A673 (cell line): ENCODE measurements at regions of chr6 and their contacts with region 1.

Region 1: DNA sequence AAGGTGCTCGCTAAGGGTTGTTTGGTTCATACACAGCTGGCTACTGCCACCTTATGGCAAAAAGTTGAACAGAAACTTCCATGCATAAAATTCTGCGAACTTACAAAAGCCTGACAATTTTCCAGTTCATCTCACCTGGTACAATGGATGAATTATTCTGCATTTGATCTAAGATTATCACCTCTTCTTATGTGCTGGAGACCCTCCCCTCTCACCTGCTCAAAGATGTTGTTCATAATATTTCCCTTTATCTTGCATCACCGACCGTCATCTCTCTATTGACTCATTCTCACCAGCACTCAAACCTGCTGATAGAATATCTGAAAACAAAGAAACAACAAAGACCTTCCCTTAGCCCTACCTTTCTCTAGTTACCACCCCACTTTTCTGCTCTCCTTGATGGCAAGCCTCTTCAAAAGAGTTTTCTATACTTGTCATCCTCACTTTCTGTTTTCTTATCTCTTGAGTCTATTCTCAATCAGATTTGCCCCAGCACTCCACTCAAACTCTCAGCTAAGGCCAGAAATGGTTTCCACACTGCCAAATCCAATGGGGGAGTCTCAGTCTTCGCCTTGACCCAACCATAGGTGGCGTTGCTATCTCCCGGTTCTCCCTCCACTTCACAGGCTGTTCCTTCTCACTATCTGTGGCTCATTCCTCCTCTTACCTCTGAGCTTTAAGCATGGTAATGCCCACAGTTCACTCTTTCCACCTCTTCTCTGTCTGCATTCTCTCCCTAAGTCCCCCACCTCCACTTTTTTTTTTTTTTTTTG is 25.8 kb downstream of the SNRNP48 start:
- DNase-seq: peak; percentile 72
- H3K4me3 ChIP-seq: no peak overlapping the region
- H3K27ac ChIP-seq: no peak overlapping the region
- H3K4me1 ChIP-seq: no peaks in the 10 kb centered on the region
- H3K27me3 ChIP-seq: no peaks in the 10 kb centered on the region
- CTCF ChIP-seq: peak; percentile 79

Region 2: DNA sequence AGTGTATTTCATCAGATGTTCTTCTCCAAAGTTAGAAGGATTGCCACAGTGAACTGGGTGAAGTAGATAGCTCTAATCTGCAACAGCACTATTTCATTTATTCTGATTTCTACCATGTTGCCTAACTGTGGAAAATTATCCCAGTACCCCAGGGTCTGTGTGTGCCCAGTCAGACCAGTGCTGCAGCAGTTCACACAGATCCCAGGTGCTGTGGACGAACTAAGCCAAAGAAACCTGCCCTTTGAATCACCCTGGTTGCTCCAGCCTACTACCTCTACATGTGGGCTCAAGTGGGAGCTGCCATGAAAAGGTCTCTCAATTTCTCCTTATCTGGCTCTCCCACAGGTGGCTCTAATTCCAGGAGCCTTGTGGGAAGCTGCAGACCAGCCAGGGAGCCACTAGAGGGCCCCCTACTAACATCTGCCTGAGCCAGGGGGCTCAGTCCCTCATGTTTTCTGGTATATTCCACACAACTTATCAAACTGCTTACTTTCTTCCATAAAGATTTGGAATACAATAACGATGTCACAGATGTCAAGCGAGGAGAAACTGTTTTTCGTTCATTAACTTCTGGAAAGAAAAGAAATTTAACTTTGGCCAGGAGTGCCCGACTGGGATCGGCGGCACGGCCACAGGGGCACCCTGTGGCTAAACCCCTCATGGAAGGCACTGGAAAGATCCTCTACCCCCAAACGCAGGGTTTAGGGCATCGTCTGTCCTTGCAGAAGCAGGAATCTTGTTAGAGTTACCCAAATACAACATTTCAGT is 1058.9 kb before region 1 on chr6:
- CTCF ChIA-PET with region 1: no interaction called
- POLR2A ChIA-PET with region 1: no interaction called
- intact Hi-C with region 1: loop called (anchors 10 kb)
- DNase-seq: peak; percentile 74
- H3K4me3 ChIP-seq: no peak overlapping the region
- H3K27ac ChIP-seq: peak overlapping the region; percentile 48
- H3K4me1 ChIP-seq: peaks cover 8% of the 10 kb centered on the region
- H3K27me3 ChIP-seq: no peaks in the 10 kb centered on the region
- CTCF ChIP-seq: peak; percentile 97

Region 3: DNA sequence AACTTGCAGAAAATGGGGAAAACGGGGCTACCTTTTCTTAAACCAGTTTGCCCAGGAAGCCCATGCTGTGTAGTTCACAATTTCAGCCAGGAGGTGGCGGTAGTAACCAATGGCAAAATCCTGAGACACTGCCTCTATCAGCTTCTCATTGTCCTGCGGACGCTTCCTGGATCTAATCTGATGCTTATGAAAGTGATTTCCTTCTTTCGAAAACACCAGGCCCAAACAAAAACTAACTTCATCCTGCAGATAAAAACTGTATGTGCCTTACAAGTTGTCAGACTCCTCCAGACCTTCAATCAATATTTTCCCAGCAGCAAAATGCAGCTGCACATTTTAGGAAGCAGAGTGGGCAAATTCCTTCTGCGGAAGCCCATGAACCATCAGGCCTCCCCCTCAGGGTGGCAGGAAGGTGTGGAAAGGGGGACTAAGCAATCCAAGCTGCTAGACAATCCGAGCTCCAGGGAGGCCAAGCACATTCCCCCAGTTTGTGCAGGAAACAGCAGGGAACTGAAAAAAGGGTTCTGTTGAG is 938.8 kb before region 1 on chr6:
- CTCF ChIA-PET with region 1: interaction called, 5 read pairs
- POLR2A ChIA-PET with region 1: no interaction called
- intact Hi-C with region 1: loop called (anchors 2 kb)
- DNase-seq: peak; percentile 91
- H3K4me3 ChIP-seq: no peak overlapping the region
- H3K27ac ChIP-seq: peak overlapping the region; percentile 55
- H3K4me1 ChIP-seq: peaks cover 30% of the 10 kb centered on the region
- H3K27me3 ChIP-seq: no peaks in the 10 kb centered on the region
- CTCF ChIP-seq: peak; percentile 99

Region 4: DNA sequence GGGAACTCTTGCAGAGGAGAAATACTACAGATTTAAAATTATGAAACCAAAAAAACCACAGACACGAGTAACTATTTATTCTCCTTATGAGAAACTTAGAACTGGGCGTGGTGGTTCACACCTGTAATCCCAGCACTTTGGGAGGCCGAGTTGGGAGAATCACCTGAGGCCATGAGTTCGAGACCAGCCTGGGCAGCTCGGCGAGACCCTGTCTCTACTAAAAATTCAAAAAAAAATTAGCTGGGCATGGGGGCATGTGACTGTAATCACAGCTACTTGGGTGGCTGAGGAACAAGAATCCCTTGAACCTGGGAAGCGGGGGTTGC is 339.6 kb before region 1 on chr6:
- CTCF ChIA-PET with region 1: interaction called, 7 read pairs
- POLR2A ChIA-PET with region 1: no interaction called
- intact Hi-C with region 1: loop called (anchors 1 kb)
- DNase-seq: no peak
- H3K4me3 ChIP-seq: no peak overlapping the region
- H3K27ac ChIP-seq: no peak overlapping the region
- H3K4me1 ChIP-seq: no peaks in the 10 kb centered on the region
- H3K27me3 ChIP-seq: no peaks in the 10 kb centered on the region
- CTCF ChIP-seq: no peak

Region 5: GRCh38 chr6:7414811-7415210 is 201.0 kb before region 1 on chr6:
- CTCF ChIA-PET with region 1: no interaction called
- POLR2A ChIA-PET with region 1: no interaction called
- intact Hi-C with region 1: loop called (anchors 5 kb)
- DNase-seq: no peak
- H3K4me3 ChIP-seq: no peak overlapping the region
- H3K27ac ChIP-seq: no peak overlapping the region
- H3K4me1 ChIP-seq: peaks cover 5% of the 10 kb centered on the region
- H3K27me3 ChIP-seq: no peaks in the 10 kb centered on the region
- CTCF ChIP-seq: no peak

Region 6: GRCh38 chr6:8063761-8064637 is 448.2 kb after region 1 on chr6 and contains the start of gene BLOC1S5:
- CTCF ChIA-PET with region 1: no interaction called
- POLR2A ChIA-PET with region 1: no interaction called
- intact Hi-C with region 1: loop called (anchors 5 kb)
- DNase-seq: peak; percentile 99
- H3K4me3 ChIP-seq: peak within 1 kb of the TSS; percentile 80
- H3K27ac ChIP-seq: peak within 1 kb of the TSS; percentile 93
- H3K4me1 ChIP-seq: peaks cover 19% of the 10 kb centered on the region
- H3K27me3 ChIP-seq: no peaks in the 10 kb centered on the region
- CTCF ChIP-seq: no peak
- total RNA-seq, gene BLOC1S5: 21.8 and 22.6 TPM in 2 replicates